Lower leg skin (tissue), 4 donors: ENCODE measurements at regions of chr15 and their contacts with region 1.

Region 1: DNA sequence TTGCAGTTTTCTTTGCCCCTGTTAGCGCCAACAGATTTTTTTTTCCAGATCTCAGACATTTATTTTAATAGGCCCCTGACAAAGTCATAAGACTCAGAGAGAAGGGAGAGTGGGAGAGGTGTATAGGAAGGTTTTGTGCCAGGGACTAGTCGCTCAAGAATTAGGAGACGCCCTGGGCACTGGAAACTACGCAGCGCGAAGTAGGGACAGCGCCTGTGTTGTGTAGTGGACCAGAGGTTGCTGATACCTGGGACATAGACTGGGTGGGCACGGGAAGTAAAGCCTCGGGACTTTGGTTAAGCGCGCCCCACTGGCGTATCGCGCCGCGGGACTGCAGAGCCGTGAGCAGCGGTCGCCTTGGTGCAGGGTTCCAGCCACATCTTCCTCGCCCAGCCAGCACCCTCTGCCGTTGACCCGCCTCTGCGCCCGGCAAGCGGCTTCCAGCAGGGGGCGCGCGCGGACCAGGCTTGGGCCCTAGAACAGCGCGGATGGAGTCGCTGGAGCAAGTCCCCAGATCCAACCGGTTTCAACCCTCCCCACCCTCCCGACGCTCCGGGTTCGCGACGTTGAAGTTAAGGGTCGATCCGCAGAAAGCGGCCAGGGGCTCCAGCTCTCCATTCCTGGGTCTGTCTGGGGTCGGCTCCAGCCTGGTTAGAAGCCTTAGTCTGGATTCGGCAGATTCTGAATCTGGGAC is 3.0 kb upstream of the ISLR2 start:
- DNase-seq: peak; percentile 82 to 98
- H3K4me3 ChIP-seq: no peak overlapping the region
- CTCF ChIP-seq: peak in 1 of 3 donors; percentile 72
- POLR2A ChIP-seq: no peak

Region 2: DNA sequence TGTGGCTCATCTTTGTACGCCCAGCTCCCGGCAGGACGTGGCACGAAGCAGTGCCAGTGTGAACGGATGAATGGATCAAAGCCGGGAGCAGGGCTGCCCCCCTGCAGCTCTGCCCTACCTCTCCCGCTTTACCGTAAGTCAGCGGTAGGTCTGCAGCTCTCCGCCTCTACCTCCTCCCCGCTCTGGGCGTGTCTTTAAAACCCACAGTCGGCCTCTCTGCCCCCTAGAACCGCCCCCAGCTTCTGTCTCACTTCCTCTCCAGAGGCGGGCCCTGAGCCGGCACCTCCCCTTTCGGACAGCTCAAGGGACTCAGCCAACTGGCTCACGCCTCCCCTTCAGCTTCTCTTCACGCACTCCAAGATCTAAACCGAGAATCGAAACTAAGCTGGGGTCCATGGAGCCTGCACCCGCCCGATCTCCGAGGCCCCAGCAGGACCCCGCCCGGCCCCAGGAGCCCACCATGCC is 133.0 kb before region 1 on chr15 and contains the start of gene PML:
- intact Hi-C with region 1: no loop called
- DNase-seq: peak; percentile 96 to 99
- H3K4me3 ChIP-seq: peak within 1 kb of the TSS; percentile 92
- CTCF ChIP-seq: no peak
- POLR2A ChIP-seq: no peak
- total RNA-seq, gene PML: 48.5 to 73.7 (median 60.3) TPM

Region 3: DNA sequence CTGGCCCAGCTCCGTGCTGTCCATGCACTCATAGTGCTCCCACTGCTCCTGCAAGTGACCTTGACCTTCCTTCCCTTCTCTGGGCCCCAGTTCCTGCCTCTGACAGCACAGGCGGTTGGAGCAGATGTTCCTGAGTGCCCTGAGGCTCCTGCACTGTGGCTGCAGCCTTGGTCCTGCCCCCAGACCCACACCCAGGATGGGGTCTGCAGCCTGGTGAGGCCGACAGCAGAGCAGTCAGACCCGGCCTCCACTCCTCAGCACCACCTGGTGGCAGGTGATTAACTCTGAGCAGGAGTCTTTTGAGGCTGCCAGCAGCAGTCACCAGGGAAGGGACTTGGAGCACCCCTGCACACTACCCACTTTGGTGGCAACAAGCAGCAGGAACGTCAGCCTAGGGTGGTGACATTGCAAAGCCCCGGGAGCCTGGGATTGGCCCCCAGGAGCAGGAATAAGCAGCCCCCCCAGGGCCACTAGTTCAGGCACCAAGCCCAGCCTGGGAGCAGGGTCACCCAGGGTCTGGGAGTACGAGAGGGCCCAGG is 175.5 kb after region 1 on chr15:
- intact Hi-C with region 1: loop called (anchors 5 kb)
- DNase-seq: no peak
- H3K4me3 ChIP-seq: no peak overlapping the region
- CTCF ChIP-seq: no peak
- POLR2A ChIP-seq: no peak

Region 4: DNA sequence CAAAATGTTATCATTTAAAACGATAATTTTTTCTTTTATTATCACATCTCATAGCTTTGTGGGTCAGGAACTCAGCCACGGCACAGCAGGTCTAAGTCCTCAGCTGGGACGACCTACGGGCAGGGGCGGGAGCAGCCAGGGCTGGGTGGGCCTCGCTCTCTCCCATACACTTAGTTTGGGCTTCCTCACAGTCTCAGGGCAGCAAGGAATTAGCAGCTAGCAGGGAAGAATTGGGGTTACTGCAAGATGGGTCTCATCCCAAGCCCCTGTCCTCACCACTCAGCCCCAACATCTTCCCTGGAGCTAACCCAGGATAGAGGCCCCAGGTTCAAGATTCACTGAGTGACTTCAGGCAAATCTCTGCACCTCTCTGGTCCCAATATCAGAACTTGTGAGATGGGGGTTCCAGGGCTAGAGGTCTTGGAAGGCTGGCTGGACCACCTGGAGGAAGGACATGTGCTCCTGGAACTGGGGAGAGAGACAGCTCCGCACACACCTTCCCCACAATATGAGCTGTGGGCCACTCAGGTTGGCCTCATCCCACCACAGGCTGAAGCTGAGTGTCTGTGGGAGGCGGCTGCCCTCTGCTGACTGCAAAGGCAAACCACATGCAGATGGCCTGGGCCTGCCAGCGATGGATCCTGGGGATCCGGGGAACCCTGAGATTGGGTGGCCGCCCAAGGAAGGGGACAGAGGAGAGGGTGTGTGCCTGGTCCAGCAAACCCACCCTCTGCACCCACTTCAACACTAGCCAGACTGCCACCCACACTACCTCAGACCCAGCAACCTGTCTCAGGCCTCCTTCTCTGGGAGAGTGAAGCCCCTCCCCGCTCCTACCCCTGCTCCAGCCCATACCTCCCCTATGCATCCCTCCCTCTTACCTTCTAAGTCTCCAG is 195.0 kb after region 1 on chr15:
- intact Hi-C with region 1: loop called (anchors 5 kb)
- DNase-seq: peak; percentile 31 to 93
- H3K4me3 ChIP-seq: no peak overlapping the region
- CTCF ChIP-seq: peak in 1 of 3 donors; percentile 52
- POLR2A ChIP-seq: no peak